Activated B cell treated with CpG ODN at 0.5 μM for 24 hours (primary cell): ENCODE measurements at regions of chr6 and their contacts with region 1.

Region 1: DNA sequence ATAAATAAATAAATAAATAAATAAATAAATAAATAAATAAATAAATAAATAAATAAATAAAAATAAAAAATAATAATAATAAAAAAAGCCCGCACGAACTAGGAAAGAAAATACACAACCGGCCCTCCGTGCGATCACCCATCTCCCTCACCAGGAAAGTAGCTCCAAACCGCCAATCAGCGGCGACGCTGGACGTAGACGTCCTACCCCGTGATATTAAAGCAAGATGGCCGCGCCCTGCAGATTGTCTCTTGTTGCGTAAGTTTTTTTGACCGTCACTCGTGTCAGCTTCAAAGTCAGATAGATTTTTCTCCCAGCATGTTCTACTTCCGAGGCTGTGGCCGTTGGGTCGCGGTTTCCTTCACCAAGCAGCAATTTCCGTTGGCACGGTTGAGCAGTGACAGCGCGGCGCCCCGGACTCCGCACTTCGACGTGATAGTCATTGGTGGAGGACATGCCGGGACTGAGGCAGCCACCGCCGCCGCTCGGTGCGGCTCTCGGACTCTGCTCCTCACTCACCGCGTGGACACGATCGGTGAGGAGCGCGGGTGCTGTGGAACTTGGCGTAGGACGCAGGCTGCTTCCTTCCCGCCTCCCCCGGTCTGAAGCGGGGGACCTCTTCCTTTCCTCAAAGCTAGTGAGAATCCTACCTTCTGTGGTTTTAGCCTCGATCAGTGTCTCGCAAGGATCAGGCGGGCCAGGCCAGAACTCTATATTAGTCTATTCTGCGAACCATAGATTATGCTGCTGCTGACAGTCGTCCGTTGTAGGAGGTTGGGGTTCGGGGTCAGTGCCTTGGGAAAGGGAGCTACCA is at the start of gene MTO1:
- DNase-seq: peak; percentile 61
- ATAC-seq: peak; percentile 94
- H3K4me3 Mint-ChIP-seq: peak within 1 kb of the TSS; percentile 97
- H3K27ac Mint-ChIP-seq: peak within 1 kb of the TSS; percentile 97
- H3K4me1 Mint-ChIP-seq: peaks cover 37% of the 10 kb centered on the region
- H3K27me3 Mint-ChIP-seq: no peaks in the 10 kb centered on the region
- CTCF ChIP-seq: no peak
- total RNA-seq, gene MTO1: 58.5 and 59.3 TPM in 2 replicates

Region 2: DNA sequence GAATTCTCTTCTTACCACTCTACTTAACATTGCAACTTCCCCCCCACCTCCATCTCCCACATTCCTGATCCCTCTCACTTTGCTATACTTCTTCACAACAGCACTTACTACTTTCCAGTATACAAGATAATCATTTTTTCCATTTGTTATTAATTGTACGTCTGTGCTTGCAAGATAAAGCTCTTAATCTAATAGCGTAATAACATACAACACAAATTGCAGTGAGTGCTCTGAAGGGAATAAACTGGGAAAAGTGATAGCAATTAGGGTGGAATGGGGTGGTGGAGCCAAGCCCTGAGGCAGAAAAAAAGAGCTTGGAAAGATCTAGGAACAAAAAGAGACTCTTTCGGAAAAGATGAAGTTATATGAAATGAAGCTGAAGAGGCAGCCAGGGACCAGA is 18.2 kb before region 1 on chr6:
- CTCF ChIA-PET with region 1: no interaction called
- POLR2A ChIA-PET with region 1: interaction called, 12 read pairs
- intact Hi-C with region 1: no loop called
- DNase-seq: no peak
- ATAC-seq: no peak
- H3K4me3 Mint-ChIP-seq: no peak overlapping the region
- H3K27ac Mint-ChIP-seq: no peak overlapping the region
- H3K4me1 Mint-ChIP-seq: peaks cover 31% of the 10 kb centered on the region
- H3K27me3 Mint-ChIP-seq: no peaks in the 10 kb centered on the region
- CTCF ChIP-seq: no peak

Region 3: GRCh38 chr6:73451223-73452107 is 10.3 kb before region 1 on chr6:
- CTCF ChIA-PET with region 1: interaction called, 7 read pairs
- POLR2A ChIA-PET with region 1: interaction called, 145 read pairs
- intact Hi-C with region 1: loop called (anchors 1 kb)
- DNase-seq: peak; percentile 54
- ATAC-seq: peak; percentile 59
- H3K4me3 Mint-ChIP-seq: peak overlapping the region; percentile 93
- H3K27ac Mint-ChIP-seq: peak overlapping the region; percentile 91
- H3K4me1 Mint-ChIP-seq: peaks cover 22% of the 10 kb centered on the region
- H3K27me3 Mint-ChIP-seq: no peaks in the 10 kb centered on the region
- CTCF ChIP-seq: no peak

Region 4: DNA sequence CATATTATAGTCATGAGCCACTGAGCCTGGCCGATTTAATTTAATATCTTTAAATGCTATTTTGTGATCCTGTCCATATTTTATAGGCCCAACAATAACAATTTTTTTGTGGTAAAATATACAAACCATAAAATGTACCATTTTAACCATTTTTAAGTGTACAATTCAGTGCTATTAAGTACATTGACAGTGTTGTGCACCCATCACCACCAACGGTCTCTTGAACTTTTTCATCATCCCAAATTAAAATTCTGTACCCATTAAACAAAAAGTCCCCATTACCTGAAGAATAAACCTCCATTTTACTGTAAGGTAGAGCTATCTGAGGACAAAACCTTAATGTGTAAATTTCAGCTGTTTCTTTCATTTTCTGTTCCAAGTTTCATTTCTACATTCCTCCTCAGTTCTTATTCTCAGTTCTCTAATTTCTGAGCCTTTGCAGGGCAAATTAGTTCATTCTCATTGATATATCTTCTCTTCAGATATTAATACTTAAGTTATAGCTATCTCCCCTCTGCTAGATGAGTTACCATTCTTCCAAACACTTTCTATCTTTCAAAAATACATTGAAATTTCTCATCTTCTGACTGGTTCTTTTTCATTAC is 10.0 kb after region 1 on chr6:
- CTCF ChIA-PET with region 1: interaction called, 5 read pairs
- POLR2A ChIA-PET with region 1: interaction called, 83 read pairs
- intact Hi-C with region 1: loop called (anchors 1 kb)
- DNase-seq: no peak
- ATAC-seq: peak; percentile 95
- H3K4me3 Mint-ChIP-seq: peak overlapping the region; percentile 75
- H3K27ac Mint-ChIP-seq: peak overlapping the region; percentile 90
- H3K4me1 Mint-ChIP-seq: peaks cover 25% of the 10 kb centered on the region
- H3K27me3 Mint-ChIP-seq: no peaks in the 10 kb centered on the region
- CTCF ChIP-seq: no peak

Region 5: GRCh38 chr6:73580247-73581149 is 118.8 kb after region 1 on chr6:
- CTCF ChIA-PET with region 1: interaction called, 4 read pairs
- POLR2A ChIA-PET with region 1: interaction called, 18 read pairs
- intact Hi-C with region 1: no loop called
- DNase-seq: peak; percentile 54
- ATAC-seq: peak; percentile 74
- H3K4me3 Mint-ChIP-seq: peak overlapping the region; percentile 80
- H3K27ac Mint-ChIP-seq: peak overlapping the region; percentile 98
- H3K4me1 Mint-ChIP-seq: peaks cover 48% of the 10 kb centered on the region
- H3K27me3 Mint-ChIP-seq: no peaks in the 10 kb centered on the region
- CTCF ChIP-seq: no peak

Region 6: DNA sequence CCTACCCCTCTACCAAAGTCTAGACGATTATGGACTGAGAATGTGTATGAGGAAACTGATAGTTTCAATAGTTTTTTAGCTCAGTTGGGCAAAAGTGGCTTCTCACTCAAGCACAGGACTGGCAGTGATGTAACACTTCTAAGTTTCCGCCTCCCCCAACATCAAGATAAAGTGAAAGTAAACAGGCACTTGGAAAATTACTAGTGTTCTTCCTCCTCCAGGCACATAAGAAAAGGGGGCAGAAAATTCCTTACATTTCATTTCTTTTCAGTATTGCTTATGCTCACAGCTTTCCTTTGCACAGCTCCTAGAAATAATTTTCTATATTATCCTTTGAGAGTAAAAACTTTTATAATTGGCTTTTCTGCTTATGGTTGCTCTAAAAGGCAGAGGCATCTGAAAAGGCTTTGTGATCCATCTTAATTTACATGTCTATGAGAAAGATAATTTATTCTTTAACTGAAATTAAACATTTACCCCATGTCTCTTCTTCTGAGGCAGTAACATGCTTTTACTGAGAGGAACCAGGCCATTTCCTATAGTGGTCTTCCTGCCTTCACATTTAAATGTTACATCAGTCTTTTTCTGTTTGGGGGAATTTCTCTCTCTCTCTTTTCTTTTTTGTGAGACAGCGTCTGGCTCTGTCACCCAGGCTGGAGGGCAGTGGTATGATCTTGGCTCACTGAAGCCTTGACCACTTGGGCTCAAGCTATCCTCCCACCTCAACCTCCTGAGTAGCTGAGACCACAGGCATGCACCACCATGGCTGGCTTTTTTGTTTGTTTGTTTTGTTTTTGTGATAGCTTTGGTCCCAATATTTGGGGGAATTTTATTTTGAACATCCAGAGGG is 124.0 kb after region 1 on chr6:
- CTCF ChIA-PET with region 1: interaction called, 4 read pairs
- POLR2A ChIA-PET with region 1: interaction called, 18 read pairs
- intact Hi-C with region 1: no loop called
- DNase-seq: no peak
- ATAC-seq: peak; percentile 76
- H3K4me3 Mint-ChIP-seq: peak overlapping the region; percentile 79
- H3K27ac Mint-ChIP-seq: peak overlapping the region; percentile 99
- H3K4me1 Mint-ChIP-seq: peaks cover 38% of the 10 kb centered on the region
- H3K27me3 Mint-ChIP-seq: no peaks in the 10 kb centered on the region
- CTCF ChIP-seq: no peak

Region 7: DNA sequence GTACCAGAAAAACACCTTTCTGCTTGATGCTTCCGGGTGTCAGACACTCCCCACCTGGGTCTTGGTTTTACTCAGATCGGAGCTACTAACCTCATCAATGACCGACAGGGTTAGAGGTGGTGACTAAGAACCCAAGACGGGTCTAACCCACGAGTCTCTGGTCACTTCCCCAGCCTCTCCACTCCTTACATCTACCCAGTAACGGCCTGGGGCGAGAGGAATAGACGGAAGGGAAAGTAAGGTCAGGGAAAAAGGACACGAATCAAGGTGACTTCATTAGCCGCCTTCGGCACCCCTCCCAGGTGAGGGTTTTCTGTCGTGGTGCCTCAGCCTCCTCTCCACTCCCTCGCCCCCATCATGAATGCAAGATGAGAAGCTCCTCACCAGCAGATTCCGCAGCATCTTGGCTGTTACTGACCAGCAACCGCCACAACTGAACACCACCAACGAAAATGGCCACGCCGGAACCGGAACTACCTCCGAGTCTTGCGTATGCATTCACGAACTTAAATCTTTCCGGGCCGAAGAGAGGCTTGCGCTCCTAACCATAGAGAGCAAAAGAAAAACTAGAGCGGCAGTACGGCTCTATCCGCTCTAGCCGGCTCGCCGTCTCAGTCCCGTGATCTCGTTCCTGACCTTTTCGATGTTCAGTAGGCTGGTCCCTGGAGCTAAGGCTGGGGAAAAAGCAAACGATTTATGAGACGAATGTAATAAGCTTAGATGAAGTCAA is 1781.8 kb after region 1 on chr6 and contains the start of gene COX7A2:
- CTCF ChIA-PET with region 1: no interaction called
- POLR2A ChIA-PET with region 1: no interaction called
- intact Hi-C with region 1: loop called (anchors 1 kb)
- DNase-seq: peak; percentile 77
- ATAC-seq: peak; percentile 97
- H3K4me3 Mint-ChIP-seq: peak within 1 kb of the TSS; percentile 94
- H3K27ac Mint-ChIP-seq: peak within 1 kb of the TSS; percentile 95
- H3K4me1 Mint-ChIP-seq: peaks cover 21% of the 10 kb centered on the region
- H3K27me3 Mint-ChIP-seq: peaks cover 13% of the 10 kb centered on the region
- CTCF ChIP-seq: no peak
- total RNA-seq, gene COX7A2: 259 and 301 TPM in 2 replicates